ENCODE measurements at regions of chr1 and their contacts with region 1.

Region 1: GRCh38 chr1:82168482-82168881 is 367.7 kb downstream of the ADGRL2 start:
- DNase-seq: no peak

Region 2: GRCh38 chr1:82034812-82035211 is 133.7 kb before region 1 on chr1:
- intact Hi-C with region 1: no loop called
- DNase-seq: no peak

Region 3: DNA sequence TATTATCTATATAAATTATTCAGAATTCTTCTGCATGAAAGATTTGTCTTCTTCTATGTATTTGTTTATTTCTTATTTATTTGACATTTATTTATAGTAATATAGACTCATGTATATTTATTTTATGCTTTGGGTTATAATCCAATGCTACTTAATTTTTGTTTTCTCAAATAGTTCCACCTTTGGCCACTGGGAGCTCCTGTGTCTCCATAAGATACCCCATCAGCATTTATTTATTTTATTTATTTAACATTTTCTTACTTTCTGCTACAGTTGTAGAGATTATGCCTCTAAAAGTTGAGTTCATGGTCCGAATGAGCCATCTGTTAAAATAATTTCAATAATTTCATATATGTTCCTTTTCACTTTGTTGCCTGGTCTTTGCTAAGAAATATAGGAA is 78.4 kb before region 1 on chr1:
- intact Hi-C with region 1: loop called in 1 of 2 experiments (anchors 2 kb)
- DNase-seq: no peak

Measured in posterior vena cava (tissue), 2 donors.